ENCODE measurements at regions of chr18 and their contacts with region 1.

Region 1: DNA sequence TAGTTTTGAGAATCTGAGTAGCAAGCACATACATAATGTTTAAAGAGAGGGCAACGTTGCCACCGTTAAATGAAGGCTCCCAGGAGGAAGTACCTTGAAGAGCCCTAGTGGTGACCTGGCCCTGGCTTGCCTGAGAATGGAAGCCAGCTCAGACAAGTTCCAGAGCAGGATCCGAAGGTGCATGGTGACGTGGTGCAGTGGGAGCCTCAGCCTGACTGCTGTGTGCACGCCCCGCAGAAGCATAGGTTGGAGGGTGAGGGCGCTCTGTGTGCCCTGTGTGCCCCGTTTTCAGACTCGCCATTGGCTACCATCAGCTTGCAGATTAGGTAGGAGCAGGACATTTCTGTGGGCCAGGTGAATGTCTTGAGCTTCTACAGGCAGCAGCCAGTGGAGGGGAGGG is 68.2 kb downstream of the ZNF407 start:
- DNase-seq: no peak

Region 2: DNA sequence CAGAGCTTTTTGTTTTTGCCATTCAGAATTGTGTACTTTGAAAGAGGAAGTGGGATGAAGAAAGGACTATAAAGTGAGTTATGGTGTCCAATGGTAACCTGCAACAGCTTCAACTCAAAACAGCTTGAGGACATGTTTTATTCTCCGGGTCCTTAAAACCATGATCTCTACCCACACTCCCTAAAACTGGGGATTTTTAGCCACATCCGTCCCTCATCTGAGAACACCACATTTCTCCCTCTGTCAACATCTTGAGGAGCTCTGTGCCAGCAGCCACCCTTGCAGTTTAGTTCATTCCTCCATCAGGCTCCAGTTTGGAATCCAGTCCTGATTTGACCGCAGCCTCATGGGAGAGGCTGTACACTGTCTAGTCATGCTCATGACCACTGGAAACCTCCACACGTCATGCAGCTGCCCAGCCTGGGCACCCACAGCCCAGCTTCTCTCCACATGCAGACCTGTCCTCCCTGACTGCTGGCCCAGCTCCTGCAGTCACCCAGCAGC is 287.7 kb before region 1 on chr18:
- CTCF ChIA-PET with region 1: no interaction called
- POLR2A ChIA-PET with region 1: no interaction called
- DNase-seq: no peak

Region 3: GRCh38 chr18:74609535-74609934 is 56.4 kb before region 1 on chr18:
- CTCF ChIA-PET with region 1: interaction called, 12 read pairs
- POLR2A ChIA-PET with region 1: no interaction called
- DNase-seq: no peak